ENCODE measurements at regions of chr3 and their contacts with region 1.

Region 1: GRCh38 chr3:102577091-102577789 is 142.4 kb downstream of the ZPLD1 start:
- DNase-seq: no peak
- ATAC-seq: no peak
- H3K4me3 ChIP-seq: no peak overlapping the region
- H3K27ac ChIP-seq: no peak overlapping the region
- H3K4me1 ChIP-seq: no peaks in the 10 kb centered on the region
- H3K27me3 ChIP-seq: no peaks in the 10 kb centered on the region
- CTCF ChIP-seq: no peak

Region 2: DNA sequence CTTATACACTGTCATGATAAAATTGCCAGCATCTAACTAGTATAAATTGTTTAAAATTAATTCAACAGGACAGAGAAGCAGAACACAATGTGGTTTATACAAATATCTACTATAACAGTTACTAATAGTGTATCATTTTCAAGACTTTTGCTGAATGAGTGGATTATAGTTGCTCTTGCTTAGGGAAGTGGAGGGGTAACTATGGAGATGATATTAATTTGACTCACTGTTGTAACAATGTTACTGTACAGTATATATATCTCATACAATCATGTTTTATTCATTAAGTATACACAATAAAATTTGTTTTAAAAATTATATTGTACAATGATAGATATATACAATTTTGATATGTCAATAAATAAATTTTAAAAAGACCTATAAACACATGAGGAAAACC is 23.4 kb before region 1 on chr3:
- CTCF ChIA-PET with region 1: no interaction called
- POLR2A ChIA-PET with region 1: no interaction called
- intact Hi-C with region 1: loop called (anchors 1 kb)
- DNase-seq: peak; percentile 16
- ATAC-seq: peak; percentile 99
- H3K4me3 ChIP-seq: no peak overlapping the region
- H3K27ac ChIP-seq: no peak overlapping the region
- H3K4me1 ChIP-seq: no peaks in the 10 kb centered on the region
- H3K27me3 ChIP-seq: no peaks in the 10 kb centered on the region
- CTCF ChIP-seq: no peak

Region 3: GRCh38 chr3:102715030-102715697 is 137.9 kb after region 1 on chr3:
- CTCF ChIA-PET with region 1: interaction called, 10 read pairs
- POLR2A ChIA-PET with region 1: no interaction called
- intact Hi-C with region 1: no loop called
- DNase-seq: peak; percentile 59
- ATAC-seq: peak; percentile 61
- H3K4me3 ChIP-seq: no peak overlapping the region
- H3K27ac ChIP-seq: no peak overlapping the region
- H3K4me1 ChIP-seq: peaks cover 6% of the 10 kb centered on the region
- H3K27me3 ChIP-seq: peaks cover 19% of the 10 kb centered on the region
- CTCF ChIP-seq: no peak